ENCODE measurements at regions of chr3 and their contacts with region 1.

Region 1: DNA sequence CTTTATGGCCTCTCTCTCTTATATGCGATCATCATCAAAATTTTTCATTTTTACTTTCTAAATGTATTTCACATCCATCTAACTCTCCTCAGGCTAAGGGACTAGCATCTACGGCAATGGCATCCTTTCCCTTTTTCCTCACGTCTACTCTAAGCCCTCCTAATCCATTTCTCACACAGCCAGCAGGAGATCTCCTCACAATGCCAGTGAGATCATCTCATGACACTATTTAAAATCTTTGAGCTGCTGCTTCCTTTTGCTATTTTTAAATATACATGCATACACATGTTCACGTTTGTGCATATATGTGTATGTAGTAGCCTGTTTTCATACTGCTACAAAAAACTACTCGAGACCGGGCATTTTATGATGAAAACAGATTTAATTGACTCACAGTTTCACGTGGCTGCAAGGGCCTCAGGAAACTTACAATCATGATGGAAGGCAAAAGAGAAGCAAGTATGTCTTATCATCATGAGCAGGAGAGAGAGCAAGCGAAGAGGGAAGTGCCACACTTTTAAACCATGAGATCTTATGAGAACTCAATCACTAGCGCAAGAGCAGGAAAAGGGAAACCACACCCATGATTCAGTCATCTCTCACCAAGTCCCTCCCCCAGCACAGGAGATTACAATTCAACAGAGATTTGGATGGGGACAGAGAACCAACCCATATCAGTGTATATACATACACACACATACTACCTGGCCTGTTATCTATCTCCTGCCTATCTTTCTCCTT is 599.2 kb upstream of the ROBO1 start:
- DNase-seq: no peak
- ATAC-seq: no peak
- H3K4me3 Mint-ChIP-seq: no peak overlapping the region
- H3K27ac Mint-ChIP-seq: no peak overlapping the region
- H3K4me1 Mint-ChIP-seq: no peaks in the 10 kb centered on the region
- H3K27me3 Mint-ChIP-seq: no peaks in the 10 kb centered on the region

Region 2: GRCh38 chr3:80297751-80298150 is 69.2 kb before region 1 on chr3:
- CTCF ChIA-PET with region 1: no interaction called
- POLR2A ChIA-PET with region 1: no interaction called
- intact Hi-C with region 1: loop called in 1 of 2 experiments (anchors 2 kb)
- DNase-seq: no peak
- ATAC-seq: no peak
- H3K4me3 Mint-ChIP-seq: no peak overlapping the region
- H3K27ac Mint-ChIP-seq: no peak overlapping the region
- H3K4me1 Mint-ChIP-seq: no peaks in the 10 kb centered on the region
- H3K27me3 Mint-ChIP-seq: no peaks in the 10 kb centered on the region

Region 3: GRCh38 chr3:80408030-80408721 is 41.2 kb after region 1 on chr3:
- CTCF ChIA-PET with region 1: no interaction called
- POLR2A ChIA-PET with region 1: no interaction called
- intact Hi-C with region 1: no loop called
- DNase-seq: no peak
- ATAC-seq: no peak
- H3K4me3 Mint-ChIP-seq: no peak overlapping the region
- H3K27ac Mint-ChIP-seq: no peak overlapping the region
- H3K4me1 Mint-ChIP-seq: no peaks in the 10 kb centered on the region
- H3K27me3 Mint-ChIP-seq: no peaks in the 10 kb centered on the region